A673 (cell line): ENCODE measurements at regions of chr2 and their contacts with region 1.

Region 1: GRCh38 chr2:8389373-8390108 is 292.3 kb upstream of the ID2 start:
- DNase-seq: peak; percentile 95
- H3K4me3 ChIP-seq: peak overlapping the region; percentile 2
- H3K27ac ChIP-seq: peak overlapping the region; percentile 95
- H3K4me1 ChIP-seq: peaks cover 44% of the 10 kb centered on the region
- H3K27me3 ChIP-seq: no peaks in the 10 kb centered on the region
- CTCF ChIP-seq: no peak

Region 2: GRCh38 chr2:7191932-7192331 is 1197.6 kb before region 1 on chr2:
- CTCF ChIA-PET with region 1: no interaction called
- POLR2A ChIA-PET with region 1: interaction called, 16 read pairs
- intact Hi-C with region 1: loop called (anchors 1 kb)
- DNase-seq: peak; percentile 96
- H3K4me3 ChIP-seq: no peak overlapping the region
- H3K27ac ChIP-seq: peak overlapping the region; percentile 93
- H3K4me1 ChIP-seq: peaks cover 82% of the 10 kb centered on the region
- H3K27me3 ChIP-seq: no peaks in the 10 kb centered on the region
- CTCF ChIP-seq: no peak

Region 3: DNA sequence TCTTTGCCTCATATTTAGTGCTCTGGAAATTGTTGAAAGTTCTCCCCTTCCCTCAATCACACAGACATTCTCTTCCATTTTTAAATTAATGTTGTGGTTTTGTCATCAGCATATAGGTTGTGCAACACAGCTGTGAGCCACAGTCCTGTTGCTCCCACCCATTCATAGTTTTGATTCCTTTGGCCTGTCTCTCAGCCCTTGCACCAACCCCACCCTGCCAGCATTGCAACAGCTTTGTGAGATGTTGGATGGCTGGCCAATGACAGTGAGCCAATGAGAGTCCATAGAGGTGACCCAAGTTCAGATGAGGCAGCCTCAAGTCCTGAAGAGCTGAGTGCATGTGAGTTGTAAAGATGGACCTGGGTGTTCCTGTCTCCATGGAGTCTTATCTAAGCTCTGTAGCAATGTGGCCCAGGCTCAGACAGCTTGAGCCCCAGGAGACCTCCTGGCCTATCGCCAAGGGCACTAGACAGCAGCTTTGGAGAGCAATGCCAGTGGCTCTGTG is 696.8 kb before region 1 on chr2:
- CTCF ChIA-PET with region 1: no interaction called
- POLR2A ChIA-PET with region 1: no interaction called
- intact Hi-C with region 1: no loop called
- DNase-seq: peak; percentile 41
- H3K4me3 ChIP-seq: no peak overlapping the region
- H3K27ac ChIP-seq: no peak overlapping the region
- H3K4me1 ChIP-seq: no peaks in the 10 kb centered on the region
- H3K27me3 ChIP-seq: no peaks in the 10 kb centered on the region
- CTCF ChIP-seq: no peak

Region 4: DNA sequence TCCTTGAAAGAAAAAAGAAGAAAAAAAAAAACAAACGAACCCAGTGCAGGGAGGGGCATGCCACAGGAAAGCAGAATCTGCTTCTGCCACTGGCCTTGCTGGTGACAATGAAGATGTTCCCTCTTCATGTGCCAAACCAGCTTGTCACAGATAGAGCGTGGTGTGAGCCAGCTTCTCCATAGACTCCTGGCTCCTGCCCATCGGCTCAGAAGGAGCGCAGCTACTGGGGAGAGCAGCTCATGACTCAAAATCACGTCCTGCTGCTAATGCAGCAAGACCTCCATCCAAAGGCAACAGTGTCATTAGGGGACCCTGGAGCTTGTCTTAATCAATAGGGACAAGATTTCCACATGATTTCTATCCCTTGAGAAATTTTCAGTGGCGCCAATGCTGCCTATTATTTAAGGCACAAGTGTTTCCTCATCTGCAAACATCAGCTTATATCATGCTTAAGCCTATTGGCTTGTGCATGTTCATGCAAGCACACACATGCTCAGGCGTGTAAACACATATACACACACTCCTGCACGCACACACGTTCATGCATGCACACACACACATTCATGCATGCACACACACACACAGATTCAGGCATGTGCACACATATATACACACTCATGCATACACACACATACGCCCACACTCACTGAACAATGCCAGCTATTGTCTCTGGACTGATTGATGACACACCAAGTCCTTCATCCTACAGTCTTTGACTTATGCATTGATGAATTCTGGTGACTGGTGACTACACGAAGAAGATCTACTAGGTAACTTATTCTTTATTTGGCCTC is 389.7 kb before region 1 on chr2:
- CTCF ChIA-PET with region 1: no interaction called
- POLR2A ChIA-PET with region 1: no interaction called
- intact Hi-C with region 1: loop called (anchors 5 kb)
- DNase-seq: no peak
- H3K4me3 ChIP-seq: no peak overlapping the region
- H3K27ac ChIP-seq: no peak overlapping the region
- H3K4me1 ChIP-seq: peaks cover 12% of the 10 kb centered on the region
- H3K27me3 ChIP-seq: no peaks in the 10 kb centered on the region
- CTCF ChIP-seq: no peak

Region 5: GRCh38 chr2:8606226-8606625 is 216.7 kb after region 1 on chr2:
- CTCF ChIA-PET with region 1: no interaction called
- POLR2A ChIA-PET with region 1: no interaction called
- intact Hi-C with region 1: no loop called
- DNase-seq: no peak
- H3K4me3 ChIP-seq: no peak overlapping the region
- H3K27ac ChIP-seq: no peak overlapping the region
- H3K4me1 ChIP-seq: no peaks in the 10 kb centered on the region
- H3K27me3 ChIP-seq: no peaks in the 10 kb centered on the region
- CTCF ChIP-seq: no peak

Region 6: GRCh38 chr2:8754106-8754776 is 364.7 kb after region 1 on chr2:
- CTCF ChIA-PET with region 1: no interaction called
- POLR2A ChIA-PET with region 1: no interaction called
- intact Hi-C with region 1: loop called (anchors 10 kb)
- DNase-seq: peak; percentile 39
- H3K4me3 ChIP-seq: no peak overlapping the region
- H3K27ac ChIP-seq: no peak overlapping the region
- H3K4me1 ChIP-seq: peaks cover 16% of the 10 kb centered on the region
- H3K27me3 ChIP-seq: no peaks in the 10 kb centered on the region
- CTCF ChIP-seq: no peak